Calu3 (cell line): ENCODE measurements at regions of chr11 and their contacts with region 1.

Region 1: GRCh38 chr11:8813658-8814057 is 97.3 kb upstream of the AKIP1 start:
- DNase-seq: peak; percentile 84
- H3K4me3 Mint-ChIP-seq: no peak overlapping the region
- H3K27ac Mint-ChIP-seq: no peak overlapping the region
- H3K4me1 Mint-ChIP-seq: peaks cover 5% of the 10 kb centered on the region
- H3K27me3 Mint-ChIP-seq: no peaks in the 10 kb centered on the region
- CTCF ChIP-seq: peak; percentile 74

Region 2: GRCh38 chr11:8593935-8594909 is 219.4 kb before region 1 on chr11 and contains the start of gene STK33:
- CTCF ChIA-PET with region 1: no interaction called
- intact Hi-C with region 1: loop called (anchors 10 kb)
- DNase-seq: peak; percentile 47
- H3K4me3 Mint-ChIP-seq: peak within 1 kb of the TSS; percentile 70
- H3K27ac Mint-ChIP-seq: no peak within 1 kb of the TSS
- H3K4me1 Mint-ChIP-seq: no peaks in the 10 kb centered on the region
- H3K27me3 Mint-ChIP-seq: peaks cover 64% of the 10 kb centered on the region
- CTCF ChIP-seq: no peak
- total RNA-seq, gene STK33: 1.7 and 3.0 TPM in 2 replicates

Region 3: GRCh38 chr11:8870411-8871170 is 56.9 kb after region 1 on chr11:
- CTCF ChIA-PET with region 1: interaction called, 3 read pairs
- intact Hi-C with region 1: loop called (anchors 5 kb)
- DNase-seq: peak; percentile 65
- H3K4me3 Mint-ChIP-seq: peak overlapping the region; percentile 80
- H3K27ac Mint-ChIP-seq: peak overlapping the region; percentile 15
- H3K4me1 Mint-ChIP-seq: peaks cover 9% of the 10 kb centered on the region
- H3K27me3 Mint-ChIP-seq: no peaks in the 10 kb centered on the region
- CTCF ChIP-seq: no peak

Region 4: GRCh38 chr11:8906629-8907028 is 93.0 kb after region 1 on chr11:
- CTCF ChIA-PET with region 1: interaction called, 6 read pairs
- intact Hi-C with region 1: loop called (anchors 5 kb)
- DNase-seq: no peak
- H3K4me3 Mint-ChIP-seq: no peak overlapping the region
- H3K27ac Mint-ChIP-seq: peak overlapping the region; percentile 82
- H3K4me1 Mint-ChIP-seq: peaks cover 31% of the 10 kb centered on the region
- H3K27me3 Mint-ChIP-seq: no peaks in the 10 kb centered on the region
- CTCF ChIP-seq: no peak